HepG2 (cell line): ENCODE measurements at regions of chr17 and their contacts with region 1.

Region 1: GRCh38 chr17:79400989-79401703 is 209.7 kb downstream of the RBFOX3 start:
- DNase-seq: peak; percentile 52
- ATAC-seq: peak; percentile 80
- H3K4me3 ChIP-seq: no peak overlapping the region
- H3K27ac ChIP-seq: no peak overlapping the region
- H3K4me1 ChIP-seq: 0 out of 2 replicates have a peak, but pooled peaks cover 4% of the 10 kb centered on the region
- H3K27me3 ChIP-seq: peaks cover 16 to 85% of the 10 kb centered on the region in 2 experiments; a peak in 4 of 5 replicates
- CTCF ChIP-seq: peak; percentile 85
- EP300 ChIP-seq: no peak
- POLR2A ChIP-seq: no peak
- RAD21 ChIP-seq: no peak

Region 2: GRCh38 chr17:79707931-79708891 is 307.1 kb after region 1 on chr17:
- CTCF ChIA-PET with region 1: no interaction called
- POLR2A ChIA-PET with region 1: no interaction called
- in situ Hi-C with region 1: loop called (anchors 10 kb)
- intact Hi-C with region 1: no loop called
- DNase-seq: peak; percentile 43
- ATAC-seq: peak; percentile 55
- H3K4me3 ChIP-seq: peak overlapping the region in 1 of 3 experiments; percentile 29; a peak in 1 of 6 replicates
- H3K27ac ChIP-seq: no peak overlapping the region
- H3K4me1 ChIP-seq: peaks cover 19% of the 10 kb centered on the region
- H3K27me3 ChIP-seq: peaks cover 12 to 48% of the 10 kb centered on the region in 2 experiments; a peak in 3 of 5 replicates
- CTCF ChIP-seq: peak; percentile 93
- EP300 ChIP-seq: no peak
- POLR2A ChIP-seq: no peak
- RAD21 ChIP-seq: peak; percentile 70